HAP-1 (cell line): ENCODE measurements at regions of chr12 and their contacts with region 1.

Region 1: DNA sequence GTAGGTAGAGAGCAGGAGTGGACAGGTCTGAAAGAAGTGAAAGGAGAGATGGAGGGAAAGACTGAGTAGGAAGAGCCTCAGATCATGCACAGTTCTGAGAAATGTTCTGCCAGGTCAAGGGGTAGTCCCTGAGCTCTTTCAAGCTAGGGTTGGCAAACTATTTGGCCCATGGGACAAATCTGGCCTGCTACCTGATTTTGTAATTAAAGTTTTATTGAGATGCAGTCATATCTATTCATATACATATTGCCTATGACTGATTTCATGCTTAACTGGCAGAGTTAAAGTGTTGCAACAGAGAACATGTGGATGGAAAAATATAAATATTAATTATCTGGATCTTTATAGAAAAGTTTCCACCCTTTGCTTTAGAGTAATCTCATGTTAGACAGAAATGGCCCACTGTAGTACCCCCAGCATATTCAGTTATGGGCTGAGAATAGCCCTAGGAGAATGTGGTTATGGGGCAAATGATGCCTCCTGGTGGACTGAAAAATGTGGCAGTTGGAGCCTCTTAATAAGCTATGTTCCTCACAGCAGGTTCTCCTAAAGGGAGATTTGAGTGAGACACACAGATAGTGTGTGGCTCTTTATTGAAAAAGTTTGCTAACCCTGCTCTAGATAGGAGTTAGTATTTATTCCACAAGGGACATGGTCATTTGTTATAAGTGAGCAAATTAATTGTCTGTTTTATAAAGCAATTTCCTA is 476.9 kb downstream of the LRIG3 start:
- DNase-seq: peak; percentile 33 to 56
- H3K4me3 ChIP-seq: no peak overlapping the region
- H3K4me1 ChIP-seq: no peaks in the 10 kb centered on the region
- H3K27me3 ChIP-seq: no peaks in the 10 kb centered on the region

Region 2: DNA sequence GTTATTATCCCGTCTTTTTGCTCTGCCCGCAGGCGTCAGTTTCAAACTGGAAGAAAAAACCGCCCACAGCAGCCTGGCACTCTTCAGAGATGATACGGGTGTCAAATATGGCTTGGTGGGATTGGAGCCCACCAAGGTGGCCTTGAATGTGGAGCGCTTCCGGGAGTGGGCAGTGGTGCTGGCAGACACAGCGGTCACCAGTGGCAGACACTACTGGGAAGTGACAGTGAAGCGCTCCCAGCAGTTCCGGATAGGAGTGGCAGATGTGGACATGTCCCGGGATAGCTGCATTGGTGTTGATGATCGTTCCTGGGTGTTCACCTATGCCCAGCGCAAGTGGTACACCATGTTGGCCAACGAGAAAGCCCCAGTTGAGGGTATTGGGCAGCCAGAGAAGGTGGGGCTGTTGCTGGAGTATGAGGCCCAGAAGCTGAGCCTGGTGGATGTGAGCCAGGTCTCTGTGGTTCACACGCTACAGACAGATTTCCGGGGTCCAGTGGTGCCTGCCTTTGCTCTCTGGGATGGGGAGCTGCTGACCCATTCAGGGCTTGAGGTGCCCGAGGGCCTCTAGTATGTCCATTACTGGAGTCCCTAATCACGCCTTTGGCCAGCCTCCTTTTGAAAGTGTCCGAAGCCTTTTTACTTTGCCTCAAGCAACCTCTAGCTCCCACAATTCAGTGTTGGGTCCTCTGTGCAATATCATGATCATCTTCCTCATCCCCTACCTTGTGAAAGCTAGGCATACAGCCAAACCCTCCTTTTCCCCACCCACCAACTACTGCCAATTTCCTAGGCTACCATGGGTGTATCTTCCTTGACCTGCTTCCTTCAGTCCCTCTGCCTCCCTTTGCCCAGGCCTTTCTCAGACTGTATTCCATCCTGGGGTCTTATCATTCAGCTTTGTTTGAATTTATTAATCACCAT is 1974.2 kb before region 1 on chr12:
- in situ Hi-C with region 1: no loop called
- DNase-seq: peak in 1 of 2 experiments; percentile 26
- H3K4me3 ChIP-seq: peak overlapping the region; percentile 68
- H3K4me1 ChIP-seq: peaks cover 8% of the 10 kb centered on the region
- H3K27me3 ChIP-seq: no peaks in the 10 kb centered on the region

Region 3: GRCh38 chr12:58346032-58346632 is 97.3 kb before region 1 on chr12:
- in situ Hi-C with region 1: loop called (anchors 10 kb)
- DNase-seq: peak in 1 of 2 experiments; percentile 63
- H3K4me3 ChIP-seq: no peak overlapping the region
- H3K4me1 ChIP-seq: no peaks in the 10 kb centered on the region
- H3K27me3 ChIP-seq: no peaks in the 10 kb centered on the region